A673 (cell line): ENCODE measurements at regions of chr9 and their contacts with region 1.

Region 1: GRCh38 chr9:37609735-37610397 is 17.5 kb upstream of the TOMM5 start:
- DNase-seq: no peak
- H3K4me3 ChIP-seq: no peak overlapping the region
- H3K27ac ChIP-seq: no peak overlapping the region
- H3K4me1 ChIP-seq: no peaks in the 10 kb centered on the region
- H3K27me3 ChIP-seq: peaks cover 5% of the 10 kb centered on the region
- CTCF ChIP-seq: no peak

Region 2: GRCh38 chr9:37550781-37551180 is 59.1 kb before region 1 on chr9:
- CTCF ChIA-PET with region 1: no interaction called
- POLR2A ChIA-PET with region 1: no interaction called
- intact Hi-C with region 1: no loop called
- DNase-seq: peak; percentile 23
- H3K4me3 ChIP-seq: no peak overlapping the region
- H3K27ac ChIP-seq: no peak overlapping the region
- H3K4me1 ChIP-seq: no peaks in the 10 kb centered on the region
- H3K27me3 ChIP-seq: no peaks in the 10 kb centered on the region
- CTCF ChIP-seq: no peak

Region 3: GRCh38 chr9:37740636-37741328 is 130.9 kb after region 1 on chr9:
- CTCF ChIA-PET with region 1: no interaction called
- POLR2A ChIA-PET with region 1: no interaction called
- intact Hi-C with region 1: loop called (anchors 5 kb)
- DNase-seq: no peak
- H3K4me3 ChIP-seq: no peak overlapping the region
- H3K27ac ChIP-seq: no peak overlapping the region
- H3K4me1 ChIP-seq: no peaks in the 10 kb centered on the region
- H3K27me3 ChIP-seq: no peaks in the 10 kb centered on the region
- CTCF ChIP-seq: no peak